Activated CD4-positive, alpha-beta memory T cell treated with anti-CD3 and anti-CD28 coated beads for 36 hours (primary cell): ENCODE measurements at regions of chr10 and their contacts with region 1.

Region 1: DNA sequence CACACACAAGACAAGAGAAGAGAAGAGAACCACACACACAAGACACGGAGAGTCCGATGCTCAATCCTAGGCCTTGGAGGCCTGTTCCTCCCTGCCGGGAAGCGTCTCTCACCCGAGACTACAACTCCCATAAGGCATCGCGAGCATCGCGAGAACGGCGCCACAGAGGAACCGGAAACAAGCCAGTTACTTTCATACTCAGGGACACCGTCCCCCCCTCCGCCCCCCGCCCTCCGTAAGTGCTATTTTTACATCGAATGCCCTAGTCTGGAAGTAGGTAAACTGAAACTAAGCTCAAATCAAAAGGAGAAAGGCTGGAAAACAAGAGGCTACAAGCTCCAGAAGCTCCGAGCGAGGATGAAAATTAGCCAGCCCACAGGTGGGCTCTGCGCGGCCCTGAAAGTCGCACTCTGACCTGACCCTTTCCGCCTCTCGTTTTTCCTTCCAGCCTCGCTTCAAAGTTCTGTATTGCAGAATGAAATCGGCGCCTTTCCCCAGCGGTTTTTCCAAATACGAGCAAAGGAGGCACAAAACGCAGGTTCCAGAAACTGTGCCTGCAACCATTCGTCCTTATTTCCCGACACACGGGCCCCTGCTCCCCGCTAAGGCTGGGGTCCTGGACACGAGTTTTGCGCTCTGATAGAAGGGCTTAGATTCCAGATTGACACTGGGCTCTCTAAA is 11.5 kb upstream of the DNAJC12 start:
- DNase-seq: peak; percentile 98
- H3K4me3 Mint-ChIP-seq: peak overlapping the region; percentile 91
- H3K27ac Mint-ChIP-seq: peak overlapping the region; percentile 98
- H3K4me1 Mint-ChIP-seq: peaks cover 13% of the 10 kb centered on the region
- H3K27me3 Mint-ChIP-seq: no peaks in the 10 kb centered on the region

Region 2: DNA sequence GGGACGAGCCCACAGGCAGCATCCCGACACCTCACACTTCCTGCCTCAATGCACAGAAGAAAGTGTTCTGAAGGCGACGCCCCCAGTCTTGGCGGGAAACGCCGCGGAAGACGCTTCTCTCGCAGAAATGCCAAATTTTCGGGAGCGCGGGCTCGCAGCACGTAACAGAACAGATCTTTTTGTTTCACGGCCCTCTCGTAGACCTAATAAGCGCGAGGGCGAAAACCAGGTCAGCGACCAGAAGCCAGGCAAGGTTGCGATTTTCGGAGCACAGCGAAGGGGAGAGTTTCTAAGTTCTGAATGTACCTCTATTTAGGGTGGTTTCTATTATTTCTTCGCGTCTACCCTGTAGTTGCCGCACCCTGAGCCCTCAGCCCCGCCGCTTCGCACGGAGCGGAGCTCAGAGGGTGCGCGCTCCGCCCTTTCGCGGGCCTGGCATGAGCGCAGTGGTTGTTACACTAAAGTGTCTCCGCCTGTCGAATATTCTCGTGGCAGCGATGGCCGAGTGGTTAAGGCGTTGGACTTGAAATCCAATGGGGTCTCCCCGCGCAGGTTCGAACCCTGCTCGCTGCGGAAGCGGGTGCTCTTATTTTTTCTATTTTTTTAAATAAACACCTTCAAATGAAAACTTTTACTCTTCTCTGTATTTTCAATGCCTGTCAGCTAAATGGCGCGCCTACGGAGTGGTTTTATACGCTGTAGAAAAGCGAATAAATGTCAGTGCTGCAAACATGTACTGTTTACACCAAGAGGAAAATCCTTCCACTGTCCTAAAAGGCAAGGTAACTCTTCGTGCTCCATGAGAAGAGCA is 85.3 kb before region 1 on chr10:
- CTCF ChIA-PET with region 1: no interaction called
- POLR2A ChIA-PET with region 1: interaction called, 6 read pairs
- intact Hi-C with region 1: loop called (anchors 1 kb)
- DNase-seq: peak; percentile 98
- H3K4me3 Mint-ChIP-seq: peak overlapping the region; percentile 78
- H3K27ac Mint-ChIP-seq: peak overlapping the region; percentile 91
- H3K4me1 Mint-ChIP-seq: peaks cover 11% of the 10 kb centered on the region
- H3K27me3 Mint-ChIP-seq: peaks cover 4% of the 10 kb centered on the region

Region 3: DNA sequence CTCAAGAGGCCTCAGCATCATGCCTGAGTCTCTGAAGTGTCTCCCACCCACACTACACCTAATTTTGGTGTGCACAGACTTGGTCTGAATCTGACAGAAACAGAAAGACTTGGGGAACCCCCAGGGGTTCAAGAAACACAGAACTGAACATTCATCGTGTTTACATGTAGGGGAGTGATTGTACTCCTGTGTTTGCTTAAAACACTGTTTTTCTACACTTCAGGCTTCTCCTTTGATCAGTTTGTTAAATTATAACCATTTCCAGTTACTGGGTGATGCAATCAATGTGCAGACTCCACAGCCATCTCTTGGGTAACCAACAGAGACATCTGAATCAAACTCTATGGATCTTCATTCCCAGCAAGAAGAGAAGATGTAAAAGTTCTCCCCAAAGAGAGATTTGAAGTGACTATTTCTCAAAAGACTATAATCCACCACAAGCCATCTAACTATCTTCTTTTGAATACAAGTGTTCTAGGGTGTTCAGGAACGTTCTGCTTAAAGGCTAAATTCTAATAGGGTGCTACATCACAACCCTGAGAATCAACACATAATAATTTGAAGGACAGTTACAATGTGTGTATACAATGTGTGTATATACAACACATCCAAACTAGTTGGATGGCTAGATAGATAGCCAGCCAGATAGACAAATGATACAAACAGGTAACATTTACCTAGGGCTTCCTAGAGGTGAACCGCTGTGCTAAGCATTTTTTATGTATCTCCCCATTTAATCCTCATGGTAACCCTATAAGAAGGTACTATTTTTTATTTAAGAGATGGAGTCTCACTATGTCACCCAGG is 45.7 kb before region 1 on chr10:
- CTCF ChIA-PET with region 1: no interaction called
- POLR2A ChIA-PET with region 1: no interaction called
- intact Hi-C with region 1: loop called (anchors 1 kb)
- DNase-seq: peak; percentile 56
- H3K4me3 Mint-ChIP-seq: no peak overlapping the region
- H3K27ac Mint-ChIP-seq: peak overlapping the region; percentile 92
- H3K4me1 Mint-ChIP-seq: peaks cover 26% of the 10 kb centered on the region
- H3K27me3 Mint-ChIP-seq: peaks cover 2% of the 10 kb centered on the region

Region 4: DNA sequence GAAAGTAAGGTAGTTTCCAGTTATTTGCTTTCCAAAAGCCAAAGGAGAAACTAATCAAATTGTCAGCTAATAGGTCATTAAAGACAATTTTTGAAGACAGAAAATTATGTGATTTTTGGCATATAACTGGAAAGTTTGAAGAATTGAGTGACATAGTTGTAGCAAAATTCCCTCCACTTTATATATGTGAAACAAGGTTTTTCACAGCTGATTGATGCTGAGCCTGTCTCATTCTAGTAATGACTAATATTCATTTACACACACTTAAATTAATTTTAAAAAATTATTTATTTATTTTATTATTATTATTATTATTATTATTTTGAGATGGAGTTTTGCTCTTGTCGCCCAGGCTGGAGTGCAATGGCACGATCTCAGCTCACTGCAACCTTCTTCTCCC is 18.7 kb after region 1 on chr10:
- CTCF ChIA-PET with region 1: interaction called, 13 read pairs
- POLR2A ChIA-PET with region 1: no interaction called
- intact Hi-C with region 1: no loop called
- DNase-seq: no peak
- H3K4me3 Mint-ChIP-seq: no peak overlapping the region
- H3K27ac Mint-ChIP-seq: no peak overlapping the region
- H3K4me1 Mint-ChIP-seq: no peaks in the 10 kb centered on the region
- H3K27me3 Mint-ChIP-seq: no peaks in the 10 kb centered on the region

Region 5: GRCh38 chr10:68074775-68075549 is 225.5 kb after region 1 on chr10 and contains the start of gene HERC4:
- CTCF ChIA-PET with region 1: no interaction called
- POLR2A ChIA-PET with region 1: no interaction called
- intact Hi-C with region 1: loop called (anchors 1 kb)
- DNase-seq: peak; percentile 94
- H3K4me3 Mint-ChIP-seq: peak within 1 kb of the TSS; percentile 89
- H3K27ac Mint-ChIP-seq: peak within 1 kb of the TSS; percentile 89
- H3K4me1 Mint-ChIP-seq: peaks cover 35% of the 10 kb centered on the region
- H3K27me3 Mint-ChIP-seq: no peaks in the 10 kb centered on the region
- total RNA-seq, gene HERC4: 55.7 to 59.0 TPM

Region 6: GRCh38 chr10:68208424-68209042 is 359.1 kb after region 1 on chr10:
- CTCF ChIA-PET with region 1: interaction called, 14 read pairs
- POLR2A ChIA-PET with region 1: no interaction called
- intact Hi-C with region 1: no loop called
- DNase-seq: peak; percentile 57
- H3K4me3 Mint-ChIP-seq: no peak overlapping the region
- H3K27ac Mint-ChIP-seq: no peak overlapping the region
- H3K4me1 Mint-ChIP-seq: no peaks in the 10 kb centered on the region
- H3K27me3 Mint-ChIP-seq: peaks cover 8% of the 10 kb centered on the region